Left ventricle myocardium superior (tissue), 1 donor: ENCODE measurements at regions of chr4 and their contacts with region 1.

Region 1: DNA sequence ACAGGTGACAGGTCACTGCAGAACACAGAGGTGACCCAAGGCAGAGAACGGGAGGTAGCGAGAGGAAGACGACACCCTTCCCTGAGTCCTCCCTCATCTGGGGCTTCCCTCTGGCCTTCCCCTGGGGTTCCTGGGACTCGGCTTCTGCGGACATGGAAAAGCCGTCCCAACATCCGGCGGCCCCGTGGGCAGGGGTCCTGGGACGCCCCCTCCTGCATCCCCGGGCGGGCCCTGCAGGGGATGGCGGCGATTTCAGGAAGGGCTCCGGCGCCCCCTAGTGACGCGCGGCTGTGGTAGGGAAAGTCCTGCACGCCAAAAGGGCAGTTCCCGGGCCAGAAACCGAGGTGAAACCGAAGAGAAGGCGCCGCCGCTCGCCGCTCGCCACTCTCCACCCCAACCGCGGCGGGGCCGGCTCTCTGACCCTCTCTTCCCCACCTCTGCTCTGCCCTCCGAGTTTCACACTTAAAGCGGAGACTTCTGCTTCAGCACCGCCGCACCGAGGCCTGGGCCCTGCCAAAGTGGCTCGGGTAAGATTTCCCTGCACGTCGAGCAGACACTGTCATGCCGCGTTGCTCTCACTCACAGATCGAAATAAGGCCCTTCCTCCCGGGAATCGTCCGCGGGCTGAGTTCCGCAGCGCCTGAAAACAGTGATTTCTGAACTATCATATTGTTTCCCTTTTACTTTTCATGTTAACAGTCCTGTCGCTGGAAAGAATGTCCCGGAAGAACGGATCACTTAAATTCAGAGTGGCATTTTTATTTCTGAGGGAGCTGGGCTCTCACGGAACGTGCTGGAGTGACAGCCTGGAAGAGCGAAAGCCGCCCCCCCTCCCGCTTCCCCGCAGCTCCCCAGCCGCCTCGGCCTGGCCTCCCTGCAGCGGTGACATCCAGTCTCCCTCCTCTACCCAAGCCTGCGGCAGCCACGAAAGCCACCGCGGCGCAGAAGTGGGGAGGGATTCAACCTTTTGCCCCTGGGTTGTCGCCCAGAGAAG is 110.6 kb downstream of the DCTD start:
- DNase-seq: peak; percentile 89
- ATAC-seq: peak; percentile 95

Region 2: DNA sequence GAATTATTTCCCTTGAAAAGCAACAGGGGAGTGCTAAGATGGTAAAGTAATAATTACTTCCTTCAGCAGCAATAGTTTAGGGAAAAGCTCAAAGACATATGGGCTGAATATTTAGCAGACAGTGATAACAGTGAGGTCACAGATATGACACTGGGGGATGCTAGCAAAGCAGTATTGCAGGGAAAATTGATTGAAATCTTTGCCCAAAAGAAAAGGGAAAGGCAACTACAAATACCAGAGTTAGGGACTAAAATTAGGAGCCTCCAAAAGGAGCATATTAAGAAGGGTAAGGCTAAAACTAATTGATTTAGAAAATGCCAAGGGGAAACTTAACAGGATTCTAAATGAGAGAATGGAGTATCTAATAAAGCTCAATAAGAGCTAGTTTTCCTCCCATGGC is 1754.6 kb before region 1 on chr4:
- intact Hi-C with region 1: no loop called
- DNase-seq: no peak
- ATAC-seq: no peak

Region 3: DNA sequence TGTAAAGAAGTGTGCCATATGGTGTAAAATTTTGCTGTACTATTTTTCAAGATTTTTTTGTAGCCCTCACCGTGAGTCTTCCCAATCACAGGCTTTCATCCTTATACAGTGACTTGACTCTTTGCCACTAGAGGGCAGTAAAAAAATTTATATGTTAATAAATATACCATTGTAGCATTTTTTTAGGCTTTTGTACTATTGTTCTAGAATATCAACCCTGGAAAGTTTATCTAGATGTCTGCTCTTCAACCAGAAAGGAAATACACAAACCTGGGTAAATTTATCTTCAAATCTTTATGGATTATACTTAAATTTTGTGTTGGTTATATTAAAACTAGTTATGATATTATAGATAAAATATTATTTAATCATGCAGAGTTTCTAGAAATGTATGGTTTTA is 328.1 kb before region 1 on chr4:
- intact Hi-C with region 1: loop called (anchors 5 kb)
- DNase-seq: no peak
- ATAC-seq: no peak

Region 4: GRCh38 chr4:182880387-182881356 is 74.1 kb after region 1 on chr4:
- intact Hi-C with region 1: no loop called
- DNase-seq: peak; percentile 77
- ATAC-seq: peak; percentile 90